MCF 10A (cell line): ENCODE measurements at regions of chr3 and their contacts with region 1.

Region 1: GRCh38 chr3:58008140-58009025 is at the start of gene FLNB:
- DNase-seq: peak; percentile 69
- H3K4me3 Mint-ChIP-seq: peak within 1 kb of the TSS; percentile 85
- H3K27ac Mint-ChIP-seq: peak within 1 kb of the TSS; percentile 91
- H3K4me1 Mint-ChIP-seq: peaks cover 42% of the 10 kb centered on the region
- H3K27me3 Mint-ChIP-seq: no peaks in the 10 kb centered on the region
- CTCF ChIP-seq: peak; percentile 71
- total RNA-seq, gene FLNB: 580 and 593 TPM in 2 replicates

Region 2: GRCh38 chr3:57864853-57865252 is 143.5 kb before region 1 on chr3:
- CTCF ChIA-PET with region 1: no interaction called
- POLR2A ChIA-PET with region 1: no interaction called
- intact Hi-C with region 1: loop called (anchors 5 kb)
- DNase-seq: peak; percentile 21
- H3K4me3 Mint-ChIP-seq: no peak overlapping the region
- H3K27ac Mint-ChIP-seq: peak overlapping the region; percentile 61
- H3K4me1 Mint-ChIP-seq: no peaks in the 10 kb centered on the region
- H3K27me3 Mint-ChIP-seq: no peaks in the 10 kb centered on the region
- CTCF ChIP-seq: peak; percentile 46

Region 3: GRCh38 chr3:57974796-57975388 is 33.5 kb before region 1 on chr3:
- CTCF ChIA-PET with region 1: interaction called, 6 read pairs
- POLR2A ChIA-PET with region 1: interaction called, 38 read pairs
- intact Hi-C with region 1: no loop called
- DNase-seq: peak; percentile 93
- H3K4me3 Mint-ChIP-seq: peak overlapping the region; percentile 31
- H3K27ac Mint-ChIP-seq: peak overlapping the region; percentile 95
- H3K4me1 Mint-ChIP-seq: peaks cover 49% of the 10 kb centered on the region
- H3K27me3 Mint-ChIP-seq: no peaks in the 10 kb centered on the region
- CTCF ChIP-seq: no peak

Region 4: DNA sequence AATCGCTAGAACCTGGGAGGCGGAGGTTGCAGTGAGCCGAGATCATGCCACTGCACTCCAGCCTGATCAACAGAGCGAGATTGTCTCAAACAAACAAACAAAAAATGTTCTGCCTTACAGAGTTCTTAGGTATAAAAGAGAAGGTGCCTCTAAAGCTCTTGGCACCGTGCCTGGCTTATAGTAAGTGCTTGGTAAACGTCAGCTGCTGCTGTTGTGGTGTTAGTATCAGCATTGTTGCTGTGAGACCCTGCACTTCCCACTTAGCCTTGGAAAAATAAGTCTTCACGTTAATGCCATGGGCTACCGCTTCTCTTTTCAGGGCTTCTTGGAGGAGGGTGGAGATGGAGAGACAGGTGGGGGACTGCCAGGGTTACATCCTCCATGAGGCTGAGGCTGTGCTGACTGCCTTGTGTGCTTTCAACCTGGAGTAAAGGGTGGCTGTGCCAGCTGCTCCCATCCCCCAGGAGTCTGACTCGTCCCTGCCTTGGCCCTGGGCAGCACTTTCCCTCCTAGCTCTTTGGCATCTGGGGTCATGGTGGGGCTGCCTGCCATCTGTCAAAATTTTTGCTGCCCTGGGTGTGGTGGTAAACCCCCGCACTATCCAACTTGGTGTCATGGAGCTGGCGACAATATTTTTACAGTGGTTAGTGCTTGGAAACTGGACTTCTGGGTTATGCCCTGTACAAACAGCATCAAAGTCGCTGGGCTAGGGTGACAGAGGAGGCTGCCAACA is 17.6 kb after region 1 on chr3:
- CTCF ChIA-PET with region 1: interaction called, 47 read pairs
- POLR2A ChIA-PET with region 1: interaction called, 33 read pairs
- intact Hi-C with region 1: no loop called
- DNase-seq: peak; percentile 81
- H3K4me3 Mint-ChIP-seq: peak overlapping the region; percentile 53
- H3K27ac Mint-ChIP-seq: peak overlapping the region; percentile 88
- H3K4me1 Mint-ChIP-seq: peaks cover 46% of the 10 kb centered on the region
- H3K27me3 Mint-ChIP-seq: no peaks in the 10 kb centered on the region
- CTCF ChIP-seq: no peak

Region 5: DNA sequence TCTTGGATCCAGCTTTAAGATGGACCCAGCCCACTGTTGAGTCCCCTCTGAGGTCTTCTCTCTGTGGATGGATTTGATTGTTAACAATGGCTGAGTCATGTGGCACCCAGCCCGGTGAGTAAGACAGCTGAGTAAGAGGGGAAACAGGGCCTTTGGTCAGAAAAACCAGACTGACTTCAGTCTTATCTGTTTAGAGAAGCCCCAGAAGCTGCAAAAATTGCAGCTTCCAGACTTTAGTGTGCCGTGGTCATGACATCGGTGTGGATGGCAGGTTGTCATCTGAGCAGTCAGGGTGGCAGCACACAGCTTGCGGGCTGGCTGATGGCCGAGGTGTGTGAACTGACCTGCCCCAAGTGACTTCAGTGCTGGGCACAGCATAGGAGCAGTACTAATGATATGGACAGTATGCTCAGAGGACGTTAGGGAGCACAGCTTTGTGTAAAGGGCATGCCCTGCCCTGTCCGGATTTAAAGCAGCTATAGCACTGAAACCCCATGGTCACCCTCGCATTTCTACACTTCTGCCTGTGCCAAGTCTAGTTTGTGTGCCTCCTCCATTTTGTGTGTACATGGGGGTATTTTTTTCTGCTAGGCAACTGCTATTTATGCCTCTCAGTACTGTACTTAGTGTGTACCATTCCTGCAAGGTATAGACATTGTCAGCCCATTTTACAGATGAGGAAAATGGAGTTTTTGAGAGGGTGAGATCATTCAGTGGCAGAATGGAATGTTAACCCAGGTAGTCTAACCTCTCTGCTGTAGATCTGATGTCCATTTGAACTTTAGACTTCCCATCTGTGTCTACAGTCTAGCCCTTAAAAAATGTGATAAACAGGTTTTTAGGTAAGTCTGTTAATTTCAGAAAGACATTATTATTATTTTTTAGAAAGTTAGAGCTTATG is 44.2 kb after region 1 on chr3:
- CTCF ChIA-PET with region 1: interaction called, 7 read pairs
- POLR2A ChIA-PET with region 1: interaction called, 98 read pairs
- intact Hi-C with region 1: loop called (anchors 5 kb)
- DNase-seq: peak; percentile 97
- H3K4me3 Mint-ChIP-seq: peak overlapping the region; percentile 68
- H3K27ac Mint-ChIP-seq: peak overlapping the region; percentile 95
- H3K4me1 Mint-ChIP-seq: peaks cover 59% of the 10 kb centered on the region
- H3K27me3 Mint-ChIP-seq: no peaks in the 10 kb centered on the region
- CTCF ChIP-seq: no peak

Region 6: GRCh38 chr3:58167431-58168351 is 159.3 kb after region 1 on chr3:
- CTCF ChIA-PET with region 1: interaction called, 16 read pairs
- POLR2A ChIA-PET with region 1: no interaction called
- intact Hi-C with region 1: no loop called
- DNase-seq: peak; percentile 54
- H3K4me3 Mint-ChIP-seq: no peak overlapping the region
- H3K27ac Mint-ChIP-seq: no peak overlapping the region
- H3K4me1 Mint-ChIP-seq: peaks cover 4% of the 10 kb centered on the region
- H3K27me3 Mint-ChIP-seq: no peaks in the 10 kb centered on the region
- CTCF ChIP-seq: peak; percentile 67

Region 7: DNA sequence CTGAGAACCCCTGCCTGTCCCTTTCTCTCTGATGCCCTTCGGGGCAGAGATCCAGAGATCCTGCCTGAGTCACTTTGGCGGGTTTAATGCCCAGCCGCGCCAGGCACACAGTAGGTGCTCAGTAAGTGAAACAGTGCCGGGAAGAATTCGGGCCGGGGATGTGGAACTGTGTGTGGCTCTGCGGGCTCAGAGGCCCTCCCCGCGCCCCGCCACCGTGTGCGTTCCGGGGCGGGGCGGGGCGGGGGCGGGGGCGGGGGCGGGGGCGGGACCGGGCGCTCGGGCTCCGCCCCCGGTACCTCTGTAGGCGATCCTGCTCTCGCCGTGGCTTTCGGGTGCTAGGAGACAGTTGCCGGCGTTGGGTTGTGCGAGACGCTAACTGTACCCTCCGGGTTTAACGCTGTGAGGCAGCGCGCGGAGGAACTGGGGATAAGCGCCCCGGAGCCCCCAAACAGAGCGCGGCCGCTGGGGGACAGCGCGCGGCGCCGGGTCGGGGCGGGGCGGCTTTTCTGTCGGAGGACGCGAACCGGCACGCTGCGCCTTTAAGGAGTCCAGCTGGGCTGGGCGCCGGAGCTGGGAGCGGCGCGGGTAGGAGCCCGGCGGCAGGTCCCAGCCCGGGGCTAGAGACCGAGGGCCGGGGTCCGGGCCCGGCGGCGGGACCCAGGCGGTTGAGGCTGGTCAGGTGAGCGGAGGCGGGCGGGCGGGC is 229.0 kb after region 1 on chr3 and contains the start of gene ABHD6:
- CTCF ChIA-PET with region 1: no interaction called
- POLR2A ChIA-PET with region 1: no interaction called
- intact Hi-C with region 1: no loop called
- DNase-seq: peak; percentile 69
- H3K4me3 Mint-ChIP-seq: peak within 1 kb of the TSS; percentile 87
- H3K27ac Mint-ChIP-seq: peak within 1 kb of the TSS; percentile 75
- H3K4me1 Mint-ChIP-seq: peaks cover 23% of the 10 kb centered on the region
- H3K27me3 Mint-ChIP-seq: peaks cover 6% of the 10 kb centered on the region
- CTCF ChIP-seq: peak; percentile 18
- total RNA-seq, gene ABHD6: 3.4 and 3.9 TPM in 2 replicates